OCI-LY7 (cell line): ENCODE measurements at regions of chr17 and their contacts with region 1.

Region 1: GRCh38 chr17:50783193-50783660 is 15.9 kb upstream of the ANKRD40CL start:
- DNase-seq: peak; percentile 76
- H3K4me3 ChIP-seq: no peak overlapping the region
- H3K27ac ChIP-seq: no peak overlapping the region
- H3K4me1 ChIP-seq: no peaks in the 10 kb centered on the region
- CTCF ChIP-seq: peak; percentile 98

Region 2: GRCh38 chr17:50820651-50821050 is 37.4 kb after region 1 on chr17:
- CTCF ChIA-PET with region 1: interaction called, 3 read pairs
- POLR2A ChIA-PET with region 1: no interaction called
- intact Hi-C with region 1: loop called (anchors 5 kb)
- DNase-seq: no peak
- H3K4me3 ChIP-seq: no peak overlapping the region
- H3K27ac ChIP-seq: no peak overlapping the region
- H3K4me1 ChIP-seq: no peaks in the 10 kb centered on the region
- CTCF ChIP-seq: no peak

Region 3: GRCh38 chr17:50841949-50842354 is 58.7 kb after region 1 on chr17:
- CTCF ChIA-PET with region 1: interaction called, 5 read pairs
- POLR2A ChIA-PET with region 1: no interaction called
- intact Hi-C with region 1: loop called (anchors 1 kb)
- DNase-seq: peak; percentile 61
- H3K4me3 ChIP-seq: no peak overlapping the region
- H3K27ac ChIP-seq: no peak overlapping the region
- H3K4me1 ChIP-seq: no peaks in the 10 kb centered on the region
- CTCF ChIP-seq: peak; percentile 83

Region 4: DNA sequence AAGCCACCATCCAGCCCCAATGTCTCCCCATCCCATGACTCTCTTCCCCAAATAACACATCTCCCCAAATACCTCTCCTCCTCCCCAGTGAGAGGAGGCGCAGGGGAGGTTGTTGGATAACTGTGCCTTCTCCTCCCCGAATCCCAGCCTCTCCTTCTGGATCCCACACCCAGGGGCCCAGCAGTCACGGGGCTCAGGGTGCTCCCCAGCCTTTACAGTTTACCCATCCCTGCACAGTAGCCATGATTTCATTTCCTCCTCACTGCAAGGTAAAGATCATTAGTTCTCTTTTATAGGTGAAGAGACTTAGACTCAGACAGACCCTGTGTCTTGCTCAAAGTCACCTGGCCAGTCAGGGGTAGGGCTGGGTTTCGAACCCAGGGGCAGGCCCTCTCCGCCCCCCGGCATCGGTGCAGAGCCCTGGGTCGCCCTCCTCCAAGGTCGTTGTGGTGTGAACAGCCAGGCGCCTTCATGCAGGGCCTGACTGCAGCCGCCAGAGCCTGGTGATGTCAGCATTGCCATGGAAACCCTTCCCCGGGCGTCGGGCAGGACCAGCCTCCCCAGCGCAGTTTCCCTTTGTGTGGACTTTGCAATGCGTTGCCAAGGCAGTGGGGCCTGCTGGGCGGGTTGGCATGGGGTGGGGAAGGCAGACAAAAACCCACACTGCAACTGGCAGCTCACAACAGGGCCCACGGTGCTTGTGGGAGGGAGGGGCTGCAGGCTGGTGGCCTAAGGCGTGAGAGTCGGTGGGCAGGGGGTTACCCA is 136.3 kb after region 1 on chr17:
- CTCF ChIA-PET with region 1: no interaction called
- POLR2A ChIA-PET with region 1: no interaction called
- intact Hi-C with region 1: no loop called
- DNase-seq: peak; percentile 47
- H3K4me3 ChIP-seq: no peak overlapping the region
- H3K27ac ChIP-seq: no peak overlapping the region
- H3K4me1 ChIP-seq: peaks cover 29% of the 10 kb centered on the region
- CTCF ChIP-seq: no peak

Region 5: GRCh38 chr17:50956750-50957523 is 173.7 kb after region 1 on chr17:
- CTCF ChIA-PET with region 1: interaction called, 5 read pairs
- POLR2A ChIA-PET with region 1: interaction called, 6 read pairs
- intact Hi-C with region 1: loop called (anchors 1 kb)
- DNase-seq: peak; percentile 73
- H3K4me3 ChIP-seq: no peak overlapping the region
- H3K27ac ChIP-seq: no peak overlapping the region
- H3K4me1 ChIP-seq: no peaks in the 10 kb centered on the region
- CTCF ChIP-seq: peak; percentile 88